HCT116 (cell line): ENCODE measurements at regions of chr11 and their contacts with region 1.

Region 1: DNA sequence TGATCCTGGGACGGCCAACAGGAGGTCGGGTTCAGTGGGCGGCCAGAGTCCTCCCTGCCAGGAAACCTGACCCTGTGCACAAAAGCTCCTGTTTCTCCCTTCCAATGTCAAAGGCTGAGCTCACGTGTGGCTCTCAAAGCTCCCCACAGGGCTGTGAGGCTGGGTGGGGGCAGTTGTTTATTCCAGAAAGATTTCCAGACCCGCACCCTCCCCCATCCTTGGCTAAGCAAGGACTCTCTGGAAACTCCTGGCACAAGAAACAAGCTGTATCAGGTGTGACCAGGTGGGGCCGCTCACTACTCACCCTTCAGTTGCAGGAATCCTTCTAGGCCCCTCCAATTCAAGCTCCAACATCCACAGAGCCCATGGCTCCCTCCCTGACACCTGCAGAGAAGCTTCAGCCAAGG is 131.9 kb downstream of the SHANK2 start:
- DNase-seq: peak; percentile 24
- ATAC-seq: peak; percentile 94
- H3K4me3 ChIP-seq: no peak overlapping the region
- H3K27ac ChIP-seq: no peak overlapping the region
- H3K4me1 ChIP-seq: peaks cover 0 to 8% of the 10 kb centered on the region in 2 experiments; a peak in 2 of 4 replicates
- H3K27me3 ChIP-seq: no peaks in the 10 kb centered on the region
- CTCF ChIP-seq: peak; percentile 65 to 84 (median 65)
- POLR2A ChIP-seq: no peak
- RAD21 ChIP-seq: peak; percentile 91

Region 2: DNA sequence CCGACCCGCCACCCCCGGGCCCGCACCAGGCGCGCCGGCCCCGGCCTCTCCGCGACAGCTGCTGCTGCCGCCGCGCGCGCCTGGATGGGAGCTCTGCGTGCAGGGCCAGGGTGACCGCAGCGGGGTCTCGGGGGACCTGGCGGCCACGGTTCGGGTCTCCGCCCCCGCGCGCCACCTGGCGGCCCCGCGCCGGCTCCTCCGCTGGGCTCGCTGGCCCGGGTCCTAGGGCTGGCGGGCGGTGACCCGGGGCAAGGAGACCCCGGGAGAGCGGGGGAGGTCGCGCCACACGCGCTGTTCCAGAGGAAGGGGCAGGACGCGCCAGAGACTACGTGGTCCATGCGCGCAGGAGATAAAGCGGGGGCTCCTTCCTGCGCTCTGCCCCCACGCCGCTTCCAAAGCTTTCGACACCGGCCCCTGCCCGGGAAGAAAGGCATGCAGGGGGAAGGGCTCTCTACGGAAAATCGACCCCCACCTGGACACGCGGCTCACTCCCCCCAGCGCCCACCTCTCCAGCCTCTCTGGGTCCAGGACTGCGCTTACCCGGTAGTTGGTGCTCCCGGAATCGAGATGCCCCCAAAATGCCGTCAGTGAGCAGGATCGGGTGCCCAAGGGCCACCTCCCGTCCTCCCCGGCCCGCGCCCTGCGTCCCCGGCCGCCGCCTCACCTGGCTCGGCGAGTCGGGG is 131.4 kb after region 1 on chr11:
- CTCF ChIA-PET with region 1: interaction called, 15 read pairs
- POLR2A ChIA-PET with region 1: no interaction called
- RAD21 ChIA-PET with region 1: no interaction called
- intact Hi-C with region 1: loop called (anchors 2 kb)
- DNase-seq: no peak
- ATAC-seq: peak; percentile 60
- H3K4me3 ChIP-seq: peak overlapping the region; percentile 68 to 81
- H3K27ac ChIP-seq: peak overlapping the region; percentile 85
- H3K4me1 ChIP-seq: peaks cover 5 to 13% of the 10 kb centered on the region in 2 experiments
- H3K27me3 ChIP-seq: no peaks in the 10 kb centered on the region
- CTCF ChIP-seq: peak; percentile 14 to 56 (median 42); a peak in 5 of 6 replicates
- POLR2A ChIP-seq: no peak
- RAD21 ChIP-seq: peak; percentile 31; the same call in 1 of the 2 replicates

Region 3: DNA sequence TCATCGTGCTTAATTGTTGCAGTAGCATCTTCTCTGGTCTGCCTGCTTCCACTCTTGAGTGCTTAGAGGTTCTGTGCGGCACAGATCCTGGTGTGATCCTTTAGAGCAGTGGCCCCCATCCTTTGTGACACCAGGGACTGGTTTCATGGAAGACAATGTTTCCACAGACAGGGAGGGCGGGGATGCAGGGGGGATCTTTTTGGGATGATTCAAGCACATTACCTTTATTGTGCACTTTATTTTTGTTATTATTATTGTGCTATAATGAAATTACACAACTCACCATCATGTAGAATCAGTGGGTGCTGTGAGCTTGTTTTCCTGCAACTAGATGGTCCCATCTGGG is 208.6 kb after region 1 on chr11:
- CTCF ChIA-PET with region 1: interaction called, 26 read pairs
- POLR2A ChIA-PET with region 1: no interaction called
- RAD21 ChIA-PET with region 1: no interaction called
- intact Hi-C with region 1: loop called (anchors 1 kb)
- DNase-seq: no peak
- ATAC-seq: peak; percentile 78
- H3K4me3 ChIP-seq: no peak overlapping the region
- H3K27ac ChIP-seq: no peak overlapping the region
- H3K4me1 ChIP-seq: no peaks in the 10 kb centered on the region
- H3K27me3 ChIP-seq: no peaks in the 10 kb centered on the region
- CTCF ChIP-seq: peak in 1 of 3 experiments; percentile 40; a peak in 2 of 6 replicates
- POLR2A ChIP-seq: no peak
- RAD21 ChIP-seq: no peak

Region 4: GRCh38 chr11:71342951-71343827 is 222.7 kb after region 1 on chr11:
- CTCF ChIA-PET with region 1: no interaction called
- POLR2A ChIA-PET with region 1: no interaction called
- RAD21 ChIA-PET with region 1: no interaction called
- intact Hi-C with region 1: loop called (anchors 1 kb)
- DNase-seq: peak; percentile 40
- ATAC-seq: peak; percentile 95
- H3K4me3 ChIP-seq: no peak overlapping the region
- H3K27ac ChIP-seq: no peak overlapping the region
- H3K4me1 ChIP-seq: no peaks in the 10 kb centered on the region
- H3K27me3 ChIP-seq: peaks cover 14% of the 10 kb centered on the region
- CTCF ChIP-seq: peak; percentile 65 to 79 (median 79)
- POLR2A ChIP-seq: no peak
- RAD21 ChIP-seq: peak; percentile 79

Region 5: GRCh38 chr11:71420455-71421241 is 300.2 kb after region 1 on chr11:
- CTCF ChIA-PET with region 1: interaction called, 7 read pairs
- POLR2A ChIA-PET with region 1: no interaction called
- RAD21 ChIA-PET with region 1: interaction called in 1 of 2 experiments, 3 read pairs
- intact Hi-C with region 1: loop called (anchors 1 kb)
- DNase-seq: peak; percentile 56
- ATAC-seq: peak; percentile 82
- H3K4me3 ChIP-seq: no peak overlapping the region
- H3K27ac ChIP-seq: no peak overlapping the region
- H3K4me1 ChIP-seq: peaks cover 0 to 5% of the 10 kb centered on the region in 2 experiments; a peak in 1 of 4 replicates
- H3K27me3 ChIP-seq: peaks cover 2% of the 10 kb centered on the region; the same call in 1 of the 2 replicates
- CTCF ChIP-seq: peak; percentile 84 to 92 (median 87)
- POLR2A ChIP-seq: no peak
- RAD21 ChIP-seq: peak; percentile 88